SK-N-SH (cell line): ENCODE measurements at regions of chr17 and their contacts with region 1.

Region 1: DNA sequence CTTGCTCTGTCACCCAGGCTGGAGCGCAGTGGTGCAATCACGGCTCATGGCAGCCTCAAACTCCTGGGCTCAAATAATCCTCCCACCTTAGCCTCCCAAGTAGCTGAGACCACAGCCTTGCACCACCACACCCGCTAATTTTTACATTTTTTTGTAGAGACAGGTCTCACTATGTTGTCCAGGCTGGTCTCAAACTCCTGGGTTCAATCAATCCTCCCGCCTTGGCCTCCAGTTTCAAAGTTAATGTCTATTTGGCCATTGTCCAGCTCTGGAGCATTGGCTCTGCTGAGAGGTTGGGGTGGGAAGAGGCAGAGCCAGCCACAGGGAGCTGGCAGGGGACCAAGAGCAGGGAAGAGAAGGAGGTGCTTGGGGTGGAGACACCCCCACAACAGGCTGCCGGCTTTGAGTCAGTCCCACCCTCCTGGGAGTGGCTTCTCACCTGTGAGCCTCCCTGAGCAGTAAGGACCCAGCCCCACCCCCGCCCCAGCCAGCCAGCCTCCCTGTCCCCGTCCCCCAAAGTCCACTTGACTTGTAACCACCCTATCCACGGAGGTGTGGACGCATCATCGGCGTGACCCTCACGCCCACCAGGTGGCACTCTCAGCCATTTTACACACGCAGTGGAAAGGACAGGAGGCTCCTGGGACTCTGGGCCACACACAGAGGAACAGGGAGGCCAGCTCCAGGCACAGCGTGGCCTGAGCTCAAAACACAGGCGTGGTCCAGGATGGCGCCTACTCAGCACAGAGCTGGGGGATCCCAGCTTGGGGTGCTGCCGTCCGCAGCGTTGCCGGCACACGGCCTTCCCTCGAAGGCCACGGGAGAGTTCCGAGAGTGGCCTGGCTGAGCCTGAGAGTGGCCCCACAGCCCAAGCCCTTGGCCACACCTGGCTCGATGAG is 22.8 kb upstream of the PVALEF start:
- DNase-seq: peak; percentile 96
- H3K4me3 ChIP-seq: no peak overlapping the region; a peak in 1 of 4 replicates
- H3K27ac ChIP-seq: no peak overlapping the region
- H3K4me1 ChIP-seq: peaks cover 0 to 3% of the 10 kb centered on the region in 2 experiments; a peak in 1 of 4 replicates
- H3K27me3 ChIP-seq: no peaks in the 10 kb centered on the region
- CTCF ChIP-seq: peak; percentile 74
- EP300 ChIP-seq: no peak
- RAD21 ChIP-seq: peak; percentile 90

Region 2: GRCh38 chr17:81101614-81102306 is 40.8 kb before region 1 on chr17:
- CTCF ChIA-PET with region 1: interaction called, 15 read pairs
- POLR2A ChIA-PET with region 1: no interaction called
- DNase-seq: peak; percentile 100
- H3K4me3 ChIP-seq: peak overlapping the region in 1 of 2 experiments; percentile 24; a peak in 1 of 4 replicates
- H3K27ac ChIP-seq: no peak overlapping the region
- H3K4me1 ChIP-seq: peaks cover 11 to 13% of the 10 kb centered on the region in 2 experiments; a peak in 3 of 4 replicates
- H3K27me3 ChIP-seq: no peaks in the 10 kb centered on the region
- CTCF ChIP-seq: peak; percentile 100
- EP300 ChIP-seq: no peak
- RAD21 ChIP-seq: peak; percentile 97

Region 3: GRCh38 chr17:81153340-81153803 is 10.8 kb after region 1 on chr17:
- CTCF ChIA-PET with region 1: interaction called, 61 read pairs
- POLR2A ChIA-PET with region 1: no interaction called
- DNase-seq: peak; percentile 15
- H3K4me3 ChIP-seq: no peak overlapping the region
- H3K27ac ChIP-seq: no peak overlapping the region
- H3K4me1 ChIP-seq: no peaks in the 10 kb centered on the region
- H3K27me3 ChIP-seq: no peaks in the 10 kb centered on the region; the same call in 1 of the 2 replicates
- CTCF ChIP-seq: no peak
- EP300 ChIP-seq: no peak
- RAD21 ChIP-seq: no peak

Region 4: GRCh38 chr17:81176665-81177064 is 34.1 kb after region 1 on chr17:
- CTCF ChIA-PET with region 1: interaction called, 14 read pairs
- POLR2A ChIA-PET with region 1: no interaction called
- DNase-seq: no peak
- H3K4me3 ChIP-seq: no peak overlapping the region
- H3K27ac ChIP-seq: no peak overlapping the region
- H3K4me1 ChIP-seq: peaks cover 0 to 6% of the 10 kb centered on the region in 2 experiments; a peak in 1 of 4 replicates
- H3K27me3 ChIP-seq: no peaks in the 10 kb centered on the region
- CTCF ChIP-seq: peak; percentile 39
- EP300 ChIP-seq: no peak
- RAD21 ChIP-seq: no peak

Region 5: GRCh38 chr17:81210868-81211267 is 68.3 kb after region 1 on chr17:
- CTCF ChIA-PET with region 1: interaction called, 147 read pairs
- POLR2A ChIA-PET with region 1: no interaction called
- DNase-seq: no peak
- H3K4me3 ChIP-seq: no peak overlapping the region
- H3K27ac ChIP-seq: no peak overlapping the region
- H3K4me1 ChIP-seq: no peaks in the 10 kb centered on the region
- H3K27me3 ChIP-seq: no peaks in the 10 kb centered on the region
- CTCF ChIP-seq: no peak
- EP300 ChIP-seq: no peak
- RAD21 ChIP-seq: no peak

Region 6: GRCh38 chr17:81238817-81239600 is 96.5 kb after region 1 on chr17 and contains the starts of genes NDUFAF8 and TEPSIN:
- CTCF ChIA-PET with region 1: interaction called, 133 read pairs
- POLR2A ChIA-PET with region 1: interaction called, 3 read pairs
- DNase-seq: peak; percentile 100
- H3K4me3 ChIP-seq: peak within 1 kb of the TSS; percentile 93 to 99
- H3K27ac ChIP-seq: peak within 1 kb of the TSS; percentile 43 to 84; a peak in 3 of 4 replicates
- H3K4me1 ChIP-seq: peaks cover 0 to 40% of the 10 kb centered on the region in 2 experiments; a peak in 2 of 4 replicates
- H3K27me3 ChIP-seq: no peaks in the 10 kb centered on the region
- CTCF ChIP-seq: no peak
- EP300 ChIP-seq: no peak
- RAD21 ChIP-seq: no peak
- polyA plus RNA-seq, gene NDUFAF8: 194 and 229 TPM in 2 replicates
- polyA plus RNA-seq, gene TEPSIN: 35.3 and 36.1 TPM in 2 replicates